K562 (cell line): ENCODE measurements at regions of chr3 and their contacts with region 1.

Region 1: DNA sequence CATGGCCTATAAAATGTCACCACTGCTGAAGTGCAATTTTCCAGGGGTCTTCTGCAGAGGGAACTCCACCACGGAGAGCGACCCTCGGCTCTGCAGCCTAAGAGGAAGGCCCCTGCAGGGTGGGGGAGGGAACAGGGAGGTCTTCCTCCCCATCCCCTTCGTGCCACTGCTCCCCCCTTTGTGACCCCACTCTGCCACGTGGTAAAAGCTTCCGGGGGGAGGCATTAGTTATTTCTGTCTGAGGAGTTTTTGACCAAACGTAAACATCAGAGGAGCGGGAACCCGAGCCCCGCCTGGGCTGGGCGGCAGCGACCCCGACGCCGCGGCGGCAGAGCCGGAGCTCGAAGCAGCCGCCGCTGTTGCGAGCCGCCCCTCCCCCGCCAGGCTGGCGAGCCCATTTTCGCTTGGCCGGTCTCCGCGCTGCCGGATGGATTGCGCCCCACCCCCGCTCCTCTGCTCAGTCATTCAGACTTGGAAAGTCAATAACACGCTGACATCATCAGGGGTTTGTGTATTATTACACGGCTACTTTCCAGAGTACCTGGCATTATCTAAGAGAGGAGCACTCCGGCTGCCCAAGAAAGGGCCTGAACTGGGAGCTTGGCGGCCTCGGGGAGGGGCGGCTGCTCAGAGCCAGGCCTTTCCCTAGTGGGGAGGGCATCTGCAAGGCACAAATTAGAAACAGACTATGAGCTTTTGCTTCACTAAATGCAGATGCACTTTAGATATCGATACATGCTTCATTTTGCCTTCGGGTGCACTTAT is 162.5 kb upstream of the TBL1XR1 start:
- DNase-seq: peak; percentile 88 to 98 (median 90)
- ATAC-seq: peak; percentile 80
- H3K4me3 ChIP-seq: peak overlapping the region; percentile 7; the same call in 1 of the 2 replicates
- H3K27ac ChIP-seq: peak overlapping the region; percentile 98
- H3K4me1 ChIP-seq: peaks cover 32 to 56% of the 10 kb centered on the region in 2 experiments
- H3K27me3 ChIP-seq: no peaks in the 10 kb centered on the region
- CTCF ChIP-seq: peak in 2 of 3 experiments; percentile 10 to 35; a peak in 2 of 6 replicates
- EP300 ChIP-seq: peak; percentile 98
- POLR2A ChIP-seq: no peak
- RAD21 ChIP-seq: peak; percentile 80 to 83

Region 2: DNA sequence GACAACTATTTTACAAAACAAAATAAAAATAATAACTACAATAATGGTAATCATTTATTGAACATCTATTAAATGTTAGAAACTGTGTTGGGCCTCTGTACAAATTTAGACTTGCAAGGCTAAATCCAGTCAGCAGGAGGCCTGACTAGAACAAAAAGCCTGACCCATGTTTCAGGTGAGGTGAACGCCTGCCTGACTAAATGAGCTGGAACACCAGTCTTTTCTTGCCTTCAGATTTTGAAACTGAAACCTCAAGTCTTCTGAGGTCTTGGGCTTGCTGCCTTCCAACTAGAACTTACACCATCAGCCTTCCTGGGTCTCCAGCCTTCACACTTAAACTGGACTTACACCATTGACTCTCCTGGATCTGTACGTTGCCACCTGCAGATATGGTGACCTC is 869.4 kb before region 1 on chr3:
- CTCF ChIA-PET with region 1: no interaction called
- POLR2A ChIA-PET with region 1: no interaction called
- in situ Hi-C with region 1: no loop called
- intact Hi-C with region 1: no loop called
- DNase-seq: no peak
- ATAC-seq: no peak
- H3K4me3 ChIP-seq: no peak overlapping the region
- H3K27ac ChIP-seq: no peak overlapping the region
- H3K4me1 ChIP-seq: no peaks in the 10 kb centered on the region
- H3K27me3 ChIP-seq: no peaks in the 10 kb centered on the region
- CTCF ChIP-seq: no peak
- EP300 ChIP-seq: no peak
- POLR2A ChIP-seq: no peak
- RAD21 ChIP-seq: no peak

Region 3: GRCh38 chr3:177050501-177051237 is 309.1 kb before region 1 on chr3:
- CTCF ChIA-PET with region 1: no interaction called
- POLR2A ChIA-PET with region 1: interaction called, 5 read pairs
- in situ Hi-C with region 1: loop called (anchors 5 kb)
- intact Hi-C with region 1: loop called (anchors 5 kb)
- DNase-seq: peak in 3 of 4 experiments; percentile 17 to 34 (median 20)
- ATAC-seq: peak; percentile 75
- H3K4me3 ChIP-seq: no peak overlapping the region
- H3K27ac ChIP-seq: no peak overlapping the region
- H3K4me1 ChIP-seq: no peaks in the 10 kb centered on the region; a peak in 2 of 5 replicates
- H3K27me3 ChIP-seq: no peaks in the 10 kb centered on the region
- CTCF ChIP-seq: peak in 1 of 3 experiments; percentile 57; a peak in 2 of 6 replicates
- EP300 ChIP-seq: no peak
- POLR2A ChIP-seq: no peak
- RAD21 ChIP-seq: peak; percentile 71 to 73

Region 4: DNA sequence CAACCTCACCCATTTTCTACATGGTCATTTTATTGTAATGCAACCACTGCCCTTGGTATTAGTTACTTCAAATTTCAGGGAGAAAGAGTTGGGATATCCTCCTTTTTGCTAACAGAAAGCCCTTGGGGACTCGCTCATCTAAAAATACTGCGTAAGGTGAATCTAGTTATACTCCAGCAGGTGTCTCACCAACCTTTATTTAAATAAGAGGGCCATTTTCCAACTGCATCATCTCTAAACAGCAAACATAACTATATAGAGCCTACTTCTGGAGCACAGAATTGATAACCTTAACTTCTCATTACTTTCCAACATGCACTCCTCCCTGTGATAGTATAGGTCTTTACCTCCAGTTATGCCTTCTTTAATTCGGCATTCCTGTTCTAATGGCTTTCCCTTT is 239.9 kb before region 1 on chr3:
- CTCF ChIA-PET with region 1: no interaction called
- POLR2A ChIA-PET with region 1: no interaction called
- in situ Hi-C with region 1: no loop called
- intact Hi-C with region 1: no loop called
- DNase-seq: no peak
- ATAC-seq: peak; percentile 45
- H3K4me3 ChIP-seq: no peak overlapping the region
- H3K27ac ChIP-seq: no peak overlapping the region
- H3K4me1 ChIP-seq: peaks cover 0 to 9% of the 10 kb centered on the region in 2 experiments; a peak in 3 of 5 replicates
- H3K27me3 ChIP-seq: no peaks in the 10 kb centered on the region
- CTCF ChIP-seq: no peak
- EP300 ChIP-seq: no peak
- POLR2A ChIP-seq: no peak
- RAD21 ChIP-seq: no peak

Region 5: GRCh38 chr3:177144923-177145780 is 214.6 kb before region 1 on chr3:
- CTCF ChIA-PET with region 1: no interaction called
- POLR2A ChIA-PET with region 1: interaction called, 5 read pairs
- in situ Hi-C with region 1: no loop called
- intact Hi-C with region 1: loop called (anchors 5 kb)
- DNase-seq: no peak
- ATAC-seq: no peak
- H3K4me3 ChIP-seq: no peak overlapping the region
- H3K27ac ChIP-seq: no peak overlapping the region
- H3K4me1 ChIP-seq: peaks cover 20 to 24% of the 10 kb centered on the region in 2 experiments; a peak in 4 of 5 replicates
- H3K27me3 ChIP-seq: no peaks in the 10 kb centered on the region
- CTCF ChIP-seq: no peak
- EP300 ChIP-seq: no peak
- POLR2A ChIP-seq: no peak
- RAD21 ChIP-seq: no peak

Region 6: GRCh38 chr3:177284383-177284881 is 75.3 kb before region 1 on chr3:
- CTCF ChIA-PET with region 1: no interaction called
- POLR2A ChIA-PET with region 1: interaction called, 3 read pairs
- in situ Hi-C with region 1: no loop called
- intact Hi-C with region 1: loop called (anchors 2 kb)
- DNase-seq: peak; percentile 64 to 91 (median 74)
- ATAC-seq: peak; percentile 90
- H3K4me3 ChIP-seq: no peak overlapping the region
- H3K27ac ChIP-seq: peak overlapping the region; percentile 69
- H3K4me1 ChIP-seq: peaks cover 0 to 36% of the 10 kb centered on the region in 2 experiments; a peak in 4 of 5 replicates
- H3K27me3 ChIP-seq: no peaks in the 10 kb centered on the region
- CTCF ChIP-seq: peak; percentile 31 to 52 (median 35)
- EP300 ChIP-seq: peak; percentile 80
- POLR2A ChIP-seq: no peak
- RAD21 ChIP-seq: peak; percentile 11 to 69; a peak in 2 of 4 replicates

Region 7: GRCh38 chr3:177337541-177338331 is 22.0 kb before region 1 on chr3:
- CTCF ChIA-PET with region 1: no interaction called
- POLR2A ChIA-PET with region 1: interaction called, 4 read pairs
- in situ Hi-C with region 1: no loop called
- intact Hi-C with region 1: loop called (anchors 1 kb)
- DNase-seq: no peak
- ATAC-seq: no peak
- H3K4me3 ChIP-seq: no peak overlapping the region
- H3K27ac ChIP-seq: peak overlapping the region; percentile 88
- H3K4me1 ChIP-seq: peaks cover 18 to 65% of the 10 kb centered on the region in 2 experiments
- H3K27me3 ChIP-seq: no peaks in the 10 kb centered on the region
- CTCF ChIP-seq: no peak
- EP300 ChIP-seq: no peak
- POLR2A ChIP-seq: no peak
- RAD21 ChIP-seq: no peak

Region 8: DNA sequence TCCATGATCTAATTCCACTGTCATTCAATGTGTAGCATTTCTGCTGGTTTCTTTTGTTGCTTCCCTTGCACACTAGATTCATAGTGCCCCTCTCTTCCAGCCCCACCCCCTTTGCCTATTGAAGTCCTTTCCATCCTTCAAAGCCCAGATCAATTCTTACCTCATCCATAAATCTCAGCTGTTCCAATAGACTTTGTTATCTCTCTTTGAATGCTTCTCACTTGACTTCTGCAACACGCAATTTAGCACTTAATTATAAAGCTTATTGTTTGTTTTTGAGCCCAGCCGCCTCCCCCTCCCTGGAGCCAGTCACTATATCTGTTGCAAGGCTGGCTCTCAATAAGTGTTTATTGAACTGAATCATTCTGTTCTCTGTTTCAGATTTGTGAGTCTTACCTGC is 12.1 kb after region 1 on chr3:
- CTCF ChIA-PET with region 1: no interaction called
- POLR2A ChIA-PET with region 1: interaction called, 22 read pairs
- in situ Hi-C with region 1: no loop called
- intact Hi-C with region 1: no loop called
- DNase-seq: no peak
- ATAC-seq: no peak
- H3K4me3 ChIP-seq: no peak overlapping the region
- H3K27ac ChIP-seq: no peak overlapping the region
- H3K4me1 ChIP-seq: no peaks in the 10 kb centered on the region
- H3K27me3 ChIP-seq: no peaks in the 10 kb centered on the region
- CTCF ChIP-seq: no peak
- EP300 ChIP-seq: no peak
- POLR2A ChIP-seq: no peak
- RAD21 ChIP-seq: no peak

Region 9: DNA sequence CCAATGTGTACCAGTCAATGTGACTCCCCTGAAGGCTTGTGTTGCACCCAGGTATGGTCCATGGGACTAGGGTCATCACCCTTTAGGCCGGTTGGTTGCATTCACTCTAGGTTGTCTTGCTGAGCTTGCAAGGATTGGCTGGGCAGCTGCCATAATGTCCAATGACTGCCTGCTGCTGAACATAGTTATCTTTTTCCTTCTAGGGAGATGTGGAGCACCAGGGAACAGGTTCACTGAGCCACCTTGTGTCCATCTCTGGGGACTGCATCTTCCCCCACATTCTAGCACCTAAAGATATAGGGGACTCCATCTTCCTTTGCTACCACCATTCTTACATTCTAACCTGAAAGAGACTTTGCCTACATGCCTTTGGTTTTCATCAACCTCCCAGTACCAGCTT is 417.9 kb after region 1 on chr3:
- CTCF ChIA-PET with region 1: no interaction called
- POLR2A ChIA-PET with region 1: interaction called, 3 read pairs
- in situ Hi-C with region 1: no loop called
- intact Hi-C with region 1: loop called (anchors 1 kb)
- DNase-seq: peak; percentile 50 to 75 (median 56)
- ATAC-seq: peak; percentile 98
- H3K4me3 ChIP-seq: no peak overlapping the region
- H3K27ac ChIP-seq: no peak overlapping the region
- H3K4me1 ChIP-seq: no peaks in the 10 kb centered on the region; a peak in 1 of 5 replicates
- H3K27me3 ChIP-seq: no peaks in the 10 kb centered on the region
- CTCF ChIP-seq: peak; percentile 68 to 78 (median 76)
- EP300 ChIP-seq: no peak
- POLR2A ChIP-seq: no peak
- RAD21 ChIP-seq: peak; percentile 87 to 93